A549 (cell line): ENCODE measurements at regions of chr2 and their contacts with region 1.

Region 1: GRCh38 chr2:37877457-37878315 is 47.4 kb upstream of the RMDN2 start:
- DNase-seq: peak; percentile 59
- ATAC-seq: peak; percentile 69 to 90
- H3K4me3 ChIP-seq: no peak overlapping the region
- H3K27ac ChIP-seq: no peak overlapping the region; a peak in 1 of 6 replicates
- H3K4me1 ChIP-seq: no peaks in the 10 kb centered on the region
- CTCF ChIP-seq: peak; percentile 98
- EP300 ChIP-seq: no peak
- POLR2A ChIP-seq: no peak
- RAD21 ChIP-seq: peak; percentile 93 to 95

Region 2: GRCh38 chr2:37389989-37390765 is 487.5 kb before region 1 on chr2:
- CTCF ChIA-PET with region 1: interaction called, 292 read pairs
- POLR2A ChIA-PET with region 1: interaction called, 3 read pairs
- DNase-seq: peak; percentile 79 to 86
- ATAC-seq: peak; percentile 86 to 91
- H3K4me3 ChIP-seq: no peak overlapping the region
- H3K27ac ChIP-seq: peak overlapping the region; percentile 35 to 80
- H3K4me1 ChIP-seq: peaks cover 22% of the 10 kb centered on the region
- CTCF ChIP-seq: no peak
- EP300 ChIP-seq: no peak
- POLR2A ChIP-seq: no peak
- RAD21 ChIP-seq: no peak

Region 3: DNA sequence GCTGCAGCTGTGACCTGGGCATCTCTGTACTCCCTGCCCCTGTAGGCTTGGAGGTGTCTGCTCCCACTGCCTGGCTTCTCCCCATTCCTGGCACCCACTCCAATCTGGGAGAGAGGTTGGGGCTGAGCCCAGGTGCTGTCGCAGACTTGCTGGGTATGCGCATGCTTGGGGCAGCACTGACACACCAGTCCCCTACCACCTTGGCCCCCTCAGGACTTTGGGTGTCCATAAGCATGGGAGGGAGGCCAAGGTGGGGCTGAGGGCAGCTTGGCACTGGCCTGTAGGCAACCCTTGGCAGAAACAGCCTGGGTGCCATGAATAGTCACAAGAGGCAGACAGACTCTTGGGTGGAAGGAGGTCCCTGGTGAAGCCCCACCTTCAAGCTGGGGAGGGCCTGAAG is 396.4 kb before region 1 on chr2:
- CTCF ChIA-PET with region 1: interaction called, 10 read pairs
- POLR2A ChIA-PET with region 1: no interaction called
- DNase-seq: no peak
- ATAC-seq: no peak
- H3K4me3 ChIP-seq: no peak overlapping the region
- H3K27ac ChIP-seq: no peak overlapping the region
- H3K4me1 ChIP-seq: no peaks in the 10 kb centered on the region
- CTCF ChIP-seq: no peak
- EP300 ChIP-seq: no peak
- POLR2A ChIP-seq: no peak
- RAD21 ChIP-seq: no peak

Region 4: DNA sequence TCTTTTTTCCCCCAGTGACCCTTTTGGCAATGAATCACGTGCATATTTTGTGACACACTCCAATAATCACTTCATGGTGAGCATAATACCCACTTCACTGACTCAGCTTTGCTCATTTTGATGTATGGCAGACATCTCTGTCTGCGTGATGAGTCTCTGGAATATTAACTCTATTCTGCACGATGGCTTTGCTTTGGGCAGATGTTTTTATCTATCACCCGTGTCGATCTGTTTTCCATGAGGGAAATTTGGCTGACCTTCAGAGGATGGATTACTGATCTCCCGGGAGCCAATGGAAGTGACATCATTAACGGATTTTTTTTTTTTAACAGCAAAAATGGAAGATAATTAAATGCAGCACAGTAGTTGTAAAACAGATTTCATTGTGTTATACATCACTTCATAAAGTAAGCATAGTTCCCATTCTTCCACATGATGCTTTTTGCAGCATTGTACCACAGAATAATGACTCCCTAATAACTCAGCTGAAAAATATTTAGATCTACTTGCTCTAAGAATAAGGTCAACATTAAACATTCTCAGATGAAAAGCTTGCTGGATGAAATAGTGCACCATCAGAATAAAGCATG is 236.0 kb before region 1 on chr2:
- CTCF ChIA-PET with region 1: interaction called, 13 read pairs
- POLR2A ChIA-PET with region 1: no interaction called
- DNase-seq: no peak
- ATAC-seq: no peak
- H3K4me3 ChIP-seq: no peak overlapping the region
- H3K27ac ChIP-seq: no peak overlapping the region
- H3K4me1 ChIP-seq: peaks cover 32% of the 10 kb centered on the region
- CTCF ChIP-seq: no peak
- EP300 ChIP-seq: no peak
- POLR2A ChIP-seq: no peak
- RAD21 ChIP-seq: no peak

Region 5: DNA sequence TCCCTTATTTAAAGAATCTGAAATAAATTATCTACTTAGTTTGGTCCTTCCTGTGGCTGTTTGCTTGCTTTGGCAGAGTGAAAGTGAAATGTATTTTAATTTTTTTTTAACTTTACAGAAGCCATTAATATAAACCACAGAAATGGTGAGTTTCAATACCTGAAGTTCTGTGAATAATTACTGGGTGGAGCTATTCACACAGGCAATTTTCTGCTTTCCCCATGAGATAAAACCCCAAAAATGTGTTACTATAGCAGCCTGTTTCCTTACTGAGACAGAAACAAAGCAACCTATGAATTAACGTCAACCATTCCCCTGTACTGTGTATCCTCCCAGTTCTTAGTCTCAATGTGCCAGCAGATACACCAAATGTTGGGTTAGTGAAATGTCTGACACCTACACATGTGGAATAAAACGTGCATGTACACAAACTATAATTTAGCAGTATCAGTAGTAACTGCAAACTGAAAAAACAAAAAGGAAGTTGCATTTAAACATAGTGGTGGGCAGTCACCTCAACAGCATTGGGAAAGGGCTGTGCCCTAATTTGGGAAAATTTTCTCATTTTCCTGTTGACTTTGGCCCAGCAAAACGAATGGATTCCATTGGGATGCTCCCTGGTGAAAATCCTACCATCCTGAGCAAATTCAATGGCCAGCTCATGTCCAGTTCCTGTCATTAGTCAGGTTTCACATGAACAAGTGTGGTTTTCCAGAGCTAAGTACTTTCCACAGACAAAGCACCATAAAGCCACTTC is 25.7 kb before region 1 on chr2:
- CTCF ChIA-PET with region 1: interaction called, 46 read pairs
- POLR2A ChIA-PET with region 1: no interaction called
- DNase-seq: no peak
- ATAC-seq: no peak
- H3K4me3 ChIP-seq: no peak overlapping the region
- H3K27ac ChIP-seq: no peak overlapping the region
- H3K4me1 ChIP-seq: no peaks in the 10 kb centered on the region
- CTCF ChIP-seq: no peak
- EP300 ChIP-seq: no peak
- POLR2A ChIP-seq: no peak
- RAD21 ChIP-seq: no peak

Region 6: DNA sequence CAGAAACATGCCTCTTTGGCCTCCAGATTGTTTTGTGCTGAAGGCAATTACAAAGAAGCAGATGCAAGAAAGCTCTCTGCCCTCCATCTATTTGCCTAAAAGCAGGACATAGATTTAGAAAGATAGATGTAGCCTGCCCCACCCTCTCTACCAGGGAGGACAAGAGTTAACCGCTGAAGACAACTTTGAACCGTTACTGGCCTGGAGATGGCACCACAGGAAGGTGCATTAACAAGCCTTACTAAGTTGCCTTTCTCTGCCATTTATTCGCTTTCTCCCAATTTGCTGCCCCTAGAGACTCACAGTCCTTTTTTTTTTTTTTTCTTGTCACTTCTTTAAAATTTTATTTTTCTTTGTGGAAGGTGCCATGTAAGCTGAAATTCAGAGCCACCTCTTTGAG is 18.6 kb after region 1 on chr2:
- CTCF ChIA-PET with region 1: interaction called, 108 read pairs
- POLR2A ChIA-PET with region 1: no interaction called
- DNase-seq: peak in 1 of 2 experiments; percentile 35
- ATAC-seq: peak in 1 of 2 experiments; percentile 53; a peak in 2 of 6 replicates
- H3K4me3 ChIP-seq: no peak overlapping the region
- H3K27ac ChIP-seq: no peak overlapping the region
- H3K4me1 ChIP-seq: peaks cover 12% of the 10 kb centered on the region; the same call in 2 of the 3 replicates
- CTCF ChIP-seq: peak; percentile 14; the same call in 1 of the 3 replicates
- EP300 ChIP-seq: no peak
- POLR2A ChIP-seq: no peak
- RAD21 ChIP-seq: peak in 1 of 2 experiments; percentile 29; a peak in 1 of 5 replicates